Activated CD8-positive, alpha-beta T cell treated with anti-CD3 and anti-CD28 coated beads, Interleukin-2, amount 10 ng/mL, durations not matched to agents 7 days and 5 days (primary cell): ENCODE measurements at regions of chr18 and their contacts with region 1.

Region 1: GRCh38 chr18:63286926-63287325 is 32.6 kb downstream of the BCL2 start:
- DNase-seq: no peak
- ATAC-seq: no peak
- H3K4me3 Mint-ChIP-seq: no peak overlapping the region
- H3K27ac Mint-ChIP-seq: no peak overlapping the region
- H3K4me1 Mint-ChIP-seq: peaks cover 61% of the 10 kb centered on the region
- H3K27me3 Mint-ChIP-seq: no peaks in the 10 kb centered on the region

Region 2: GRCh38 chr18:63192885-63193349 is 94.0 kb before region 1 on chr18:
- CTCF ChIA-PET with region 1: no interaction called
- POLR2A ChIA-PET with region 1: no interaction called
- DNase-seq: no peak
- ATAC-seq: no peak
- H3K4me3 Mint-ChIP-seq: no peak overlapping the region
- H3K27ac Mint-ChIP-seq: no peak overlapping the region
- H3K4me1 Mint-ChIP-seq: peaks cover 53% of the 10 kb centered on the region
- H3K27me3 Mint-ChIP-seq: no peaks in the 10 kb centered on the region

Region 3: GRCh38 chr18:63244607-63245006 is 42.3 kb before region 1 on chr18:
- CTCF ChIA-PET with region 1: no interaction called
- POLR2A ChIA-PET with region 1: no interaction called
- DNase-seq: no peak
- ATAC-seq: no peak
- H3K4me3 Mint-ChIP-seq: no peak overlapping the region
- H3K27ac Mint-ChIP-seq: no peak overlapping the region
- H3K4me1 Mint-ChIP-seq: peaks cover 48% of the 10 kb centered on the region
- H3K27me3 Mint-ChIP-seq: no peaks in the 10 kb centered on the region

Region 4: GRCh38 chr18:63267975-63268721 is 18.8 kb before region 1 on chr18:
- CTCF ChIA-PET with region 1: interaction called, 25 read pairs
- POLR2A ChIA-PET with region 1: interaction called, 4 read pairs
- DNase-seq: peak; percentile 46
- ATAC-seq: peak; percentile 90
- H3K4me3 Mint-ChIP-seq: peak overlapping the region; percentile 60
- H3K27ac Mint-ChIP-seq: peak overlapping the region; percentile 64
- H3K4me1 Mint-ChIP-seq: peaks cover 79% of the 10 kb centered on the region
- H3K27me3 Mint-ChIP-seq: no peaks in the 10 kb centered on the region